Mammary epithelial cell (primary cell): ENCODE measurements at regions of chr13 and their contacts with region 1.

Region 1: DNA sequence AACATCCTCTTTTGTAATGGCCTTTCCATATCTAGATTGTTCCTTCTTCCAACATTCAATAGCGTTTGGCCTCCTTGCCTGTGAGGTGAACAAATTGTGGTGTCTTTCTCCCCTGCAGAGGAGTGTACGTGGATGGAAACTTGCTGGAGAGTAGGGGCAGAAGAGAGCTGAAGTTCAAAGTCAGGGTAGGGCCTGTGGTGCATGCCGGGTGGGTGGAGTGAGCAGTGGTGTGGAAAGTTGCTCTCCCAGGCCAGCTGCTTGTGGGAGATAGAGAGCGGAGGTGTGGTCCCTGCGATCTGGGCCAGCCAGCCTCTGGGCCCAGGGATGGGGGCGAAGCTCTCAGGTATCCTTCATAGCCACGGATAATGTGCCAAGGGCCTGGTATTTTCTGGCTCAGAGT is 6.5 kb downstream of the RGCC start:
- DNase-seq: no peak
- H3K4me3 ChIP-seq: no peak overlapping the region
- H3K27ac ChIP-seq: no peak overlapping the region
- H3K4me1 ChIP-seq: peaks cover 11% of the 10 kb centered on the region
- H3K27me3 ChIP-seq: no peaks in the 10 kb centered on the region
- CTCF ChIP-seq: no peak

Region 2: GRCh38 chr13:41377446-41377845 is 86.4 kb before region 1 on chr13:
- CTCF ChIA-PET with region 1: no interaction called
- dilution Hi-C with region 1: no loop called
- in situ Hi-C with region 1: no loop called
- intact Hi-C with region 1: no loop called
- DNase-seq: no peak
- H3K4me3 ChIP-seq: no peak overlapping the region
- H3K27ac ChIP-seq: no peak overlapping the region
- H3K4me1 ChIP-seq: no peaks in the 10 kb centered on the region
- H3K27me3 ChIP-seq: no peaks in the 10 kb centered on the region
- CTCF ChIP-seq: no peak

Region 3: DNA sequence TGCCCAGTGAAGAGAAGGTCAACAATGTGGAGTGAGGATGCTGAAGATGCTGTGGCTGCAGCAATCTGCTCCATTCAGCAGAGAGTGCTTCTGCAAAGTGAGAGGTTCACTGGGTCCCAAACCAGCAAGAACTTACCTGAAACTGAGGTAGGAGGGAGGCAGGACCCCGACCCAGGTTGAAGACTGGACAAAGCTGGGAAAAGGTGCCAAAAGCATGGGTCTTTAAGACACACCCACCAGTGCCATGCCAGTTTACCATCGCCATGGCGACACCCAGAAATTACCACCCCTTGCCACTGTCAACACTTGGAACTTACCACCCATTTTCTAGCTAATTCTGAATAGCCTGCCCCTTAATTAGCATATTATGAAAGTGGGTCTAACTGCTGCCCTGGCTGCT is 64.2 kb after region 1 on chr13:
- CTCF ChIA-PET with region 1: no interaction called
- dilution Hi-C with region 1: loop called (anchors 5 kb)
- in situ Hi-C with region 1: no loop called
- intact Hi-C with region 1: no loop called
- DNase-seq: no peak
- H3K4me3 ChIP-seq: no peak overlapping the region
- H3K27ac ChIP-seq: no peak overlapping the region
- H3K4me1 ChIP-seq: no peaks in the 10 kb centered on the region
- H3K27me3 ChIP-seq: no peaks in the 10 kb centered on the region
- CTCF ChIP-seq: no peak